ENCODE measurements at regions of chr16 and their contacts with region 1.

Region 1: GRCh38 chr16:5801396-5801795 is 703.8 kb upstream of the EEF2KMT start:
- DNase-seq: no peak
- H3K4me3 ChIP-seq: no peak overlapping the region
- CTCF ChIP-seq: no peak

Region 2: DNA sequence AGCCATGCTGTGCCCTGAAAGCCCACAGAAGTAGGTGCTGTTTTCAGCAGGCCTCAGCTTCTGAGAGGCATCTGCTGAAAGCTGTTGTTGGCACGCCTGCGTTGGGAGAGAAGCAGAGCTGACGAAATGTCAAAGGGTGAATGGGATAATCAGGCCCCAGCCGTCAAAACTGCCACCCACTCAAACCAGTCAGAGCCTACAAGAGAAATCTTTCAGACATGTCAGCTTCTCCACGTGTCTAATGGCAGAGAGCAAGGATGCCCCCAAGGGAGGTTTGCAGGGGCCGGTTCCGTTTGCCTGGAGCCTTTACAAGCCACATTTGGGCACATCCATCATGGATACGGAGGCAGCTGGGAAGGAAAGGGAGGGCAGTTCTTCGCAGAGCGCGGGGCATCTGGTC is 135.6 kb before region 1 on chr16:
- in situ Hi-C with region 1: no loop called
- DNase-seq: no peak
- H3K4me3 ChIP-seq: no peak overlapping the region
- CTCF ChIP-seq: no peak

Region 3: DNA sequence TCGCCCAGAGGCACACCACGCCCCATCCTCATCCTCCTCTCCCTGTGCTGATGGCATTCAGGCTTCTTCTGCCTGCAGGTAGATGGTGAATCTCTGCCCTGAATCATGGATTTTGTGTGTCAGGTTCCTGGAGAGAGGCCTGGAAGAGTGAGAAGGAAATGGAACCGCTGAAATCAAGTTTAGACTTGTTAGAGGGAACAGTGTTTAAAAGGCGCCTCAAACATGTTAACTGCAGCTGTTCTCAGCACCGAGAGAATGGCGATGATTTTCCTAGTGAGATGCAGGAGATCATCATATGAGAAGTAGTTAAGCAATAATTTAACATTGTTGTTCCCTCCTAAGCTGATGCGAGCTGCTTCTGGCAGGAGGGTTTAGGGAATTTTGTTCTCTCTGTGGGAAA is 40.6 kb after region 1 on chr16:
- in situ Hi-C with region 1: loop called (anchors 5 kb)
- DNase-seq: no peak
- H3K4me3 ChIP-seq: no peak overlapping the region
- CTCF ChIP-seq: no peak